Dendritic cell treated with granulocyte-macrophage colony-stimulating factor and Interleukin-4, amounts not matched to agents 40 ng/mL and 50 ng/mL, for 4 days (primary cell): ENCODE measurements at regions of chr1 and their contacts with region 1.

Region 1: GRCh38 chr1:152001391-152002249 is 8.0 kb upstream of the S100A10 start:
- H3K4me3 Mint-ChIP-seq: no peak overlapping the region
- H3K27ac Mint-ChIP-seq: peak overlapping the region; percentile 85
- H3K4me1 Mint-ChIP-seq: peaks cover 39% of the 10 kb centered on the region
- H3K27me3 Mint-ChIP-seq: peaks cover 17% of the 10 kb centered on the region

Region 2: GRCh38 chr1:151888972-151889570 is 112.5 kb before region 1 on chr1:
- intact Hi-C with region 1: loop called (anchors 1 kb)
- H3K4me3 Mint-ChIP-seq: no peak overlapping the region
- H3K27ac Mint-ChIP-seq: no peak overlapping the region
- H3K4me1 Mint-ChIP-seq: peaks cover 7% of the 10 kb centered on the region
- H3K27me3 Mint-ChIP-seq: no peaks in the 10 kb centered on the region

Region 3: DNA sequence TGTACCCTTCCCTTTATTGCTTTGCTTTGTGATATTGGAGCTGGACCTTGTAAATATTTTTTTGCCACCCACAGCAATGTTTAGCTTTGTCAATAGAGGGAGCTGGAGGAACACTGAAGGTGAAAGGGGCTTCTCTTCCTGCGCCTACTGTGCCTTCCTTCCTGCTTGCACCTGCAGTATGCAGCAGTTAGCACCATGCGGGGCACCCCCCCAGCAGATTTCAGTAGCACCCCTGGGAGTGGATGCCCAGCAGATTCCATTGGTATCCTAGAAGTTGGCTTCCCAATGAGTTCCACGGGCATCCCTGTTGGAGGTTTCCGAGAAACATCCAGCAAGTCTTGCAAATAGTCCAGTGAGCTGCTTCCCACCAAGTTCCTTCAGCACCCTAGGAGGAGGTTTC is 33.6 kb before region 1 on chr1:
- intact Hi-C with region 1: loop called (anchors 1 kb)
- H3K4me3 Mint-ChIP-seq: no peak overlapping the region
- H3K27ac Mint-ChIP-seq: no peak overlapping the region
- H3K4me1 Mint-ChIP-seq: peaks cover 41% of the 10 kb centered on the region
- H3K27me3 Mint-ChIP-seq: no peaks in the 10 kb centered on the region

Region 4: GRCh38 chr1:152034646-152035405 is 33.2 kb after region 1 on chr1:
- intact Hi-C with region 1: loop called (anchors 5 kb)
- H3K4me3 Mint-ChIP-seq: peak overlapping the region; percentile 97
- H3K27ac Mint-ChIP-seq: peak overlapping the region; percentile 100
- H3K4me1 Mint-ChIP-seq: peaks cover 32% of the 10 kb centered on the region
- H3K27me3 Mint-ChIP-seq: no peaks in the 10 kb centered on the region